ENCODE measurements at regions of chr9 and their contacts with region 1.

Region 1: GRCh38 chr9:83199243-83199642 is 136.3 kb upstream of the RASEF start:
- DNase-seq: no peak
- ATAC-seq: peak; percentile 68 to 83 (median 80)
- H3K4me3 ChIP-seq: no peak overlapping the region
- H3K27ac ChIP-seq: no peak overlapping the region
- H3K4me1 ChIP-seq: no peaks in the 10 kb centered on the region
- H3K27me3 ChIP-seq: peaks cover 0 to 9% (median 0%) of the 10 kb centered on the region in 3 donors
- CTCF ChIP-seq: peak; percentile 66

Region 2: GRCh38 chr9:83544002-83544698 is 344.9 kb after region 1 on chr9:
- intact Hi-C with region 1: loop called in 1 of 2 experiments (anchors 5 kb)
- DNase-seq: peak; percentile 19 to 58
- ATAC-seq: peak; percentile 69 to 93 (median 82)
- H3K4me3 ChIP-seq: no peak overlapping the region
- H3K27ac ChIP-seq: no peak overlapping the region
- H3K4me1 ChIP-seq: peaks cover 1% of the 10 kb centered on the region
- H3K27me3 ChIP-seq: no peaks in the 10 kb centered on the region
- CTCF ChIP-seq: peak; percentile 65

Region 3: GRCh38 chr9:83596896-83597504 is 397.8 kb after region 1 on chr9:
- intact Hi-C with region 1: loop called in 1 of 2 experiments (anchors 5 kb)
- DNase-seq: no peak
- ATAC-seq: peak in 2 of 4 donors; percentile 42 to 51
- H3K4me3 ChIP-seq: no peak overlapping the region
- H3K27ac ChIP-seq: no peak overlapping the region
- H3K4me1 ChIP-seq: no peaks in the 10 kb centered on the region
- H3K27me3 ChIP-seq: no peaks in the 10 kb centered on the region
- CTCF ChIP-seq: peak; percentile 54

Region 4: DNA sequence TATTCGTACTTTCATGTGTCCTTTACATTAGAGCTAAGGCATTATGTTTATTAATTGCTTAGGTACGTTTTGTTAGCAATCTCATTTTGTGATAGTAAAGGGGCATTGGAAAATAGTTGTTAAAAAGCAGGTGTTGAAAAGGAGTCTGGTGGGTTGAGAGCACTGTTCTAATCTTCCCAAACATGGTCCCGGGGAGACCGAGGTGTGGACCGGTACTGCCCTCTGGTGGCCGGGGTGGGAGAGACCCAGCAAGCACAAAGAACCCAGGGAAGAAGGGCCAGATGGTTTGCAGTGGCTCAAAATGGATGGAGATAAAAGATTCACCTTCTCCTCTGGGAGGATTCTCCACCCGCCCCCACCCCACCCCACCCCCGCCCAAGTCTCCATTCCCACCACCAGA is 449.8 kb after region 1 on chr9:
- intact Hi-C with region 1: loop called in 1 of 2 experiments (anchors 10 kb)
- DNase-seq: peak; percentile 64 to 86
- ATAC-seq: peak; percentile 78 to 86 (median 80)
- H3K4me3 ChIP-seq: no peak overlapping the region
- H3K27ac ChIP-seq: no peak overlapping the region
- H3K4me1 ChIP-seq: no peaks in the 10 kb centered on the region
- H3K27me3 ChIP-seq: no peaks in the 10 kb centered on the region
- CTCF ChIP-seq: peak; percentile 67